Vagina (tissue), 2 donors: ENCODE measurements at regions of chr1 and their contacts with region 1.

Region 1: DNA sequence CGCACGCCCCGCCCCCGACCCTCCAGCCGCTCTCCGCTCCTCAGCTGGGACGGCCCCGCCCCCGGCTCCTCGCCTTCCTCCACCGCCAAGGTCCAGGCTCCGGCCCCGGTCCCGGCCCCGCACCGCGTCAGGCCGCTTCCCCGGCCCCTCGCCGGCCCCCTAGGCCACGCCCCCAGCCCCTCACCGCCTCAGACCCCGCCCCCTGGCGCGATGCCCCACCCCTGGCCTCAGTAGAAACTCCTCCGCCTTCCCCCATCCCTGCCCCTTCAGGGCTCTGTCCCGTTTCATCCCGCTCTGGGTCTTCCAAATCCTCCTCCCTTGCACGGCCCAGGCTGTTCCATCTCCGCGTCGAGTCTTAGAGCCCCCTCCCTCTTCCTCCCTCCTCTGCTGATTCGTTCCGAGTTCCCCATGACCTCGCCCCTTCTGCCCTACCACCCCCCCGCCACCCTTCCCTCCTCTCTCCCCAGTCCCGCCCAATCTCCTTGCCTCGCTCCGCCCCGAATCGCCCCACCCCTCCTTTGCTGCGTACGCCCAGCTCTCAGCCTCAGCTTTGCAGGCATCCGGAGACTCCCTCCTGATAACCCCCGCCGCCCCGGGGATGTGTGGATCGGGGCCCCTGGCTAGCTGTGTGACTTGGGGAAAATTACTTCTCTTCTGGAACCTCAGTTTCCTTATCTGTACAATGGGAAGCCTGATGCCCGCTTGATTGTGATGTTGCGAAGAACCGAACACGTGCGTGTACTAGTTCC is 448 bp upstream of the ASAP3 start:
- DNase-seq: peak in 1 of 2 donors; percentile 98
- H3K4me3 ChIP-seq: peak overlapping the region; percentile 92
- H3K27ac ChIP-seq: peak overlapping the region; percentile 93
- H3K4me1 ChIP-seq: peaks cover 26% of the 10 kb centered on the region
- H3K27me3 ChIP-seq: no peaks in the 10 kb centered on the region
- CTCF ChIP-seq: no peak
- POLR2A ChIP-seq: no peak

Region 2: DNA sequence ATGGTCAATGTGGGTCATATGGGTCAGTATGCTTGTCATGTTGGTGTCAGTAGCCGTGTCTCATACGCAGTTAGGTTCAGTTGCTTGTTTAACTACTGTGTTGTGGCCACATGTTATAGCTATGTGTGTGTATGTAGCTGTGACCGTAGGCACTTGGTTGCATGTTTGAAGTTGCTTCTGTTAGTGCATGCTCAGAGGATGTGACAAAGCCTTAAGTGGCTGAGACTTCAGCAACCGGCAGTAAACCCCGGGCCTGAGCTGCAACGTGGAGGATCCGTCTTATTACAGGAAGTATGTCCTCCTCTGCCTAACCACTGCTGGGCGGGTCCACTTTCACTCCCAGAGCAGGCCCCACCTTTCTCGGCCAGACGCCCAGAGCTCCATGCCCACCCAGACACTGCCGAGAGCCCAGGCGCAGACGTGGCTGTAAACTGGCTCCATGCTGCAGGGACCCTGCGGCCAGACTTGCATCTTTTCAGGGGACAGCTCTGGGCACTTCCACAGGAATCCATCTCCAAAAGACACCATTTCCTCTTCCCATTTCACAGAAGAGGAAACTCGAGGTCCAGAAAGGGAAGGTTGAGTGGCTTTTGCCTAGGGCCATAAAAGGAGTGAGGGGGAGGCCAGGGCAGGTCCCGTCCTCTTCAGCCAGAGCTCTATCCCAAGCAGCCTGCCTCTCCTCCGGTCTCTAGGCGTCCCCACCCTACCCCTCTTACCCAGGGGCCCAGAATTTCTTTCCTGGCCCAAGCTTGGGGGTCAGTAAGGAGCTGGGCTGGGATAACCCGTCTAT is 62.0 kb before region 1 on chr1:
- intact Hi-C with region 1: loop called (anchors 10 kb)
- DNase-seq: no peak
- H3K4me3 ChIP-seq: peak overlapping the region; percentile 10 to 27
- H3K27ac ChIP-seq: peak overlapping the region; percentile 79
- H3K4me1 ChIP-seq: peaks cover 46% of the 10 kb centered on the region
- H3K27me3 ChIP-seq: no peaks in the 10 kb centered on the region
- CTCF ChIP-seq: no peak
- POLR2A ChIP-seq: no peak

Region 3: DNA sequence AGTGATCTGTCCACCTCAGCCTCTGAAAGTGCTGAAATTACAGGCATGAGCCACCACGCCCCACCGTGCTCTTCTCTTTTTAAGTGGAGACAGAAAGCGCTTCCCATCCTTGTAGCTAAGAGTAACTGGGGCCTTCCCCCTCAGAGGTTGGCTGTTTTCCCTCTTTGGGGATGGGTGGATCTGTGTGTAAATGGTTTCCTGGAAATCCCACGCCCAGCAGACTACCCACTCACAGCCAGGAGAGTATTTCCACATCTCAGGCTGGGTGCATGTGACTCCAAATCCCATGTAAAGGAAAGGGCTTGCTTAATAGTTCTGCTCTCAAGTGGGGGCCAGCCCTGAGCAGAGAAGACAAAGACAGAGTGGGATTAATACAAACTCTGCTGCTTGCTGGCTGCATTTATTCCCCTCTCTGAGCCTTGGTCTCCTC is 40.3 kb before region 1 on chr1:
- intact Hi-C with region 1: no loop called
- DNase-seq: peak in 1 of 2 donors; percentile 99
- H3K4me3 ChIP-seq: no peak overlapping the region
- H3K27ac ChIP-seq: peak overlapping the region; percentile 72
- H3K4me1 ChIP-seq: peaks cover 46% of the 10 kb centered on the region
- H3K27me3 ChIP-seq: no peaks in the 10 kb centered on the region
- CTCF ChIP-seq: no peak
- POLR2A ChIP-seq: no peak